Dorsolateral prefrontal cortex (tissue), 120 donors: ENCODE measurements at regions of chr9 and their contacts with region 1.

Region 1: DNA sequence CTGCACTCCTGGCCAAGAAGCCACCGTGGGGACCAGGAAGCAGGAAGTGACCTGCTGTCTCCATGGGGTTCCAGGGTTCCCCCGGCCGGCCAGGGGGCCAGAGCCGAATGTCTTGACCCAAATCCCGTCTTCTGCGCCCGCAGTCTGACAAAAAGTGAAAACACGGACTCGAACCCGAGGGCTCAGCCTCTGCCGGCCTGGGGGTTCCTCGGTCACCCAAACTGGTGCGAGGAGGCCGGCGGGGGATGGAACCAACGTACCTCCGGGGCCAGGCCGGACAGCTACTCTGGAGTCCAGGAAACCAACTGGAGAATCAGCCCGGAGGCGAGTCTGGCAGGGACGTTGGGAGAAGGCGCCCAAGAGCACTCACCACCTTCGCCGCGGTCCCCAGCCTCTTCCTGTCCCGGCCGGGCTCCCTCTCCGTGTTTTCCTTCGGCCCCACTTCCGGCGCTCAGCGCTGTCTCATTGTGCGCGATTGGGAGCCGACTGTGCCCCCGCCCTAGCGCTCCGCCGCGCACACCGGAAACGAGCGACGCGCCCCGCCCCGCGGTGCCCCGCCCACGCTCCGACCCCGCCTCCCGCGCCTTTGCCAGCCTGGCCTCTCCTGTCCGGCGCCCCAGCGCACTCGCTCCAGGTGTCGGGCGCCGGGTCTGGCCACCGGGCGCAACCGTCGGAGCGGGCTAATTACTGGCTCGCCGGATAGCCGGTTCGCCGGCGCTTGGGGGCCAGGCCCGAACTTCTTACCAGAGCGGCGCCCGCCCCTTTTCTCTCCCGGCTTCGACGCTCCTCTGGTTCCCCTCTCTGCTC is at the start of gene TUT7:
- DNase-seq: peak; percentile 89 to 98 (median 94)
- H3K4me3 ChIP-seq: peak within 1 kb of the TSS; percentile 71 to 100 (median 93)
- H3K27ac ChIP-seq: peak within 1 kb of the TSS; percentile 55 to 98 (median 92)
- H3K27me3 ChIP-seq: no peaks in the 10 kb centered on the region
- CTCF ChIP-seq: peak in 23 of 56 donors; percentile 9 to 51 (median 23)
- total RNA-seq, gene TUT7: 16.3 to 37.4 (median 25.7) TPM

Region 2: DNA sequence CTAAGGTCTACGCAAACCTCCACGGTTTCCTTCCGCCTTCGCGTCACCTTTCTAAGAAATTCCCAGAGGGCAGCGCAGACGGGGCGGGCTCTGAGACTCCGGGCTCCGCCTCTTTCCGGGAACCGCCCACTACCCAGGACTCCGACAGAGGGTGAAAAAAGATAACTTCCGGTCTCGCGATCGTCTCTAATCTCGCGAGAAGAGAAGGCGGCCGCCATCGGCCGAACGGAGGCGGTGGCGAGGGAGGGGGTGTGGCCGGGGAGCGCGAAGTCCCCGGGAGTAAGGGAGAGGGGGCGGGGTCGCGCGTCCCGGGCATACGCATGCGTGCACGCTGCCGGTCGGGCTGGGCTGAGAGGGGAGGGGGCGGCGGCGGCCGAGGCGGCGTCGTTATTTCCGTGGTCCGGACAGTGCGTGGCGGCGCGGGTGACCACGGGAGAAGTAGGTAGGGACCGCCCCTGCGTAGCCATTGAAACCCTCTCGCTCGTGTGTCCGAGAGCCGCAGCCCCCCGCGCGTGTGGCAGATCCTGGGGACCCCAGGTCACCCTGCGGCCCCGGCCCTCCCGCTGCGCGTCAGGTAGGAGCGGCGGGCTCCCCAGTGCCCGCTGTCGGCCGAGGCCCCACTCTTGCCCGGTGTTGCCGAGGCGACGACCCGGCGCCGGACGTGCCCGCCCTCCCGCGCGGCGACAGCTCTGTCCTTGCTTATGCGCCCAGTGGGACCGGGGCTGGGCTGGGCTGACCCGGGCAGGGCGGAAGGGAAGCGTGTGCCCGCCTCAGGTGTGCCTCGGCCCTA is 413.2 kb before region 1 on chr9 and contains the start of gene NAA35:
- intact Hi-C with region 1: loop called (anchors 2 to 5 kb)
- DNase-seq: peak; percentile 92 to 99 (median 98)
- H3K4me3 ChIP-seq: peak within 1 kb of the TSS; percentile 72 to 100 (median 96)
- H3K27ac ChIP-seq: peak within 1 kb of the TSS; percentile 74 to 99 (median 93)
- H3K27me3 ChIP-seq: no peaks in the 10 kb centered on the region
- CTCF ChIP-seq: peak in 24 of 56 donors; percentile 5 to 44 (median 20)
- total RNA-seq, gene NAA35: 23.8 to 40.6 (median 31.0) TPM

Region 3: DNA sequence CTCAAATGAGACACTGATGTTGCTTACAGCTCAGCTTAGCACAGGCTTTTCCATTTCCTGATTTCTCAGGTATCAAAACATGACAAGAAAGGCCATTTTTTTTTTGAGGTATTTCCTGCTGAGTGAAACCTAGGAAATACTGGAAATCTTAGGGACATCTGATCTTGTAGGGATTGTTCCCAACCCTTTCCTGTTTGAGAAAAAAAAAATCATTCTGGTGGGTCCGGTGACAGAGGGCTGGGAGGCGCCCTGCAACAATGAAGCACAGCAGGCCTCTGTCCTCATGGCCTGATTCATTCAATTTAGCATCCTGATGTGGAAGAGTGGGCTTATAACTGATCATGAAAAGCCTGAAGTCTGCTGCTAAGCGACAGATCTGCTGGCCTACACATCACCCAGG is 91.8 kb before region 1 on chr9:
- intact Hi-C with region 1: no loop called
- DNase-seq: no peak
- H3K4me3 ChIP-seq: no peak overlapping the region
- H3K27ac ChIP-seq: peak overlapping the region in 1 of 59 donors; percentile 20
- H3K27me3 ChIP-seq: no peaks in the 10 kb centered on the region
- CTCF ChIP-seq: no peak

Region 4: DNA sequence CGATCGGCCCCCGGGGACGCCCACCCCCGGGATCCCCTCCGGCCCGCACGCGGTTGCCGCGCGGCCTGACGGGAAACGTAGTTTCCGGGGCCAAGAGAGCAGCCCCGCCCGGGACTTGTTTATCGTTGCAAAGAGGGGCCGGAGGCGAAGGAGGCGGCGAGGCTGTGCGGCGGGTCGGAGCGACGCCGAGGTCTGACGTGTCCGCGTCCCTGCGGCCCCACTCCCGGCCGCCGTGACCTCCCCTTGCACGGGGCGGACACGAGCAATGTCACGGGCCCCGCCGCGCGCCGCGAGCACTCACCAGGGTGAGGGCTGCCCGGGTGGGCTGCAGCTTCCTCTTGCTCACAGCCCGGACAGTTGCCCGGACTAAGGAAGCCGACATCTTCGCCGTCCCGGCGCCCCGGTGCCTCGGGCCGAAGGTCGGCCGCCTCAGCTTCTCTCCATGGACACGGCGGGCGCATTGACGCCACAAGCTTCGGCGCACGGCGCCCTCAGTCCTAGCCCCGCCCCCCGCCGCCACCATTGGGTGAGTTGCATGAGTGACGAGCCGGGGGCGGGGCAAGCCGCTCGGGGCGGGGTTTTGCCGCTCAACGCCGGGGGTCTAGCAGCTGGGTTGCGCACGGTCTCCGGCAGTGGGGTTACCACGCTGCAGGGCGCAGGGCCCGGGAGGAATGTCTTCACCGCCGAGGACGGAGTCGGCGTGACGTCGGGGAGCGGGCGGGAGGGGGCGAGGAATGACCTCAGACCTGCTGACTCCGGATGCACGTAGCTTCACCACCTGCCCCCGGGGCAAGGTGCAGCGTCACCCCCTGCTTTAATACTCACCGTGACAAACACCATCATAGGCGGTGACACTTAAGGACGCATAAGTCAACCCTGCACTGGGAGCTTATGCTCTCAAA is 71.9 kb before region 1 on chr9 and contains the start of gene ISCA1:
- intact Hi-C with region 1: loop called in 1 of 2 experiments (anchors 5 kb)
- DNase-seq: peak; percentile 94 to 99 (median 97)
- H3K4me3 ChIP-seq: peak within 1 kb of the TSS; percentile 63 to 100 (median 95)
- H3K27ac ChIP-seq: peak within 1 kb of the TSS; percentile 86 to 100 (median 98)
- H3K27me3 ChIP-seq: no peaks in the 10 kb centered on the region
- CTCF ChIP-seq: peak in 8 of 56 donors; percentile 2 to 34 (median 10)
- total RNA-seq, gene ISCA1: 41.6 to 97.5 (median 70.2) TPM